ENCODE measurements at regions of chr4 and their contacts with region 1.

Region 1: GRCh38 chr4:186029571-186030398 is 39.2 kb upstream of the TLR3 start:
- DNase-seq: peak; percentile 54 to 95
- H3K4me3 ChIP-seq: peak overlapping the region; percentile 20 to 50
- H3K27ac ChIP-seq: peak overlapping the region; percentile 74 to 86
- H3K4me1 ChIP-seq: peaks cover 7 to 18% of the 10 kb centered on the region in 2 donors
- H3K27me3 ChIP-seq: no peaks in the 10 kb centered on the region
- CTCF ChIP-seq: no peak

Region 2: DNA sequence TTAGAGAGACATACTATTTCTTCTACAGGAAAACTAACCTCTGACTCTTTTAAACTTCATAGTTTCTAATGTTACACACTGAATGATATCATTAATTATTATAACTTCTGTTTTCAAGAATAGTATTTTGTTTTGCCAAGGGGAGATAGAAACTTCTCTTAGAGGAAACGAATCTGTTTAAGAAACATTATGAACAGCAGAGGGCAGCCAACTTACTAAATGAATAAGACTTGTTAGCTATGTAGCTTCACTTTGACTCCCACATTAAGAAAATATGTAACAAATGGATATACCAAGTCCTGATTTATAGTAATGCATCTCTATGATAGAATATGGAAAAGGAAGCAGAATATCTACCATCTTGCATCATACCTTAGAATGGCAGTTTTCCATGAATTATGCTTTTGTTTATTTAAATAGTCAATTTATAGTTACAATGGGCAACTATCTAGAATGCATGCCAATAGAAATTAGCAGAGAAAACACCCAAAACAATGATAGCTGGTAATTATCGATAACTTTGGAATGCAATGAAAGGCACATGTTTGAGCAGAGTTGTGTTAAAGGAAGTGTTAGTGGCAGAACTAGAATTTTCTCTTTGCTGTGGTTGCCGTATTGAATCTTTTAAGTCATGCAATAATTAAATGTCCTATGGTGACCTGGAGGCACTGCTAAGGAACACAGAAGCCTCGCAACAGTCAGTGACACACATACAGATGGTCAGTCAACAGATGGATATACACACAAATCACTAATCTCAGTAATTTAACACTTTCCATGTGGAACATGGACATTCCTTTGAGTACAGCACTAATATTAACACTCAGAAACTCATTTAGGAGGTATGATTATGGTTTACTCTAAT is 388.7 kb before region 1 on chr4:
- intact Hi-C with region 1: loop called (anchors 2 kb)
- DNase-seq: no peak
- H3K4me3 ChIP-seq: no peak overlapping the region
- H3K27ac ChIP-seq: no peak overlapping the region
- H3K4me1 ChIP-seq: peaks cover 0 to 3% of the 10 kb centered on the region in 2 donors
- H3K27me3 ChIP-seq: no peaks in the 10 kb centered on the region
- CTCF ChIP-seq: peak in 2 of 3 experiments; percentile 40 to 56

Region 3: DNA sequence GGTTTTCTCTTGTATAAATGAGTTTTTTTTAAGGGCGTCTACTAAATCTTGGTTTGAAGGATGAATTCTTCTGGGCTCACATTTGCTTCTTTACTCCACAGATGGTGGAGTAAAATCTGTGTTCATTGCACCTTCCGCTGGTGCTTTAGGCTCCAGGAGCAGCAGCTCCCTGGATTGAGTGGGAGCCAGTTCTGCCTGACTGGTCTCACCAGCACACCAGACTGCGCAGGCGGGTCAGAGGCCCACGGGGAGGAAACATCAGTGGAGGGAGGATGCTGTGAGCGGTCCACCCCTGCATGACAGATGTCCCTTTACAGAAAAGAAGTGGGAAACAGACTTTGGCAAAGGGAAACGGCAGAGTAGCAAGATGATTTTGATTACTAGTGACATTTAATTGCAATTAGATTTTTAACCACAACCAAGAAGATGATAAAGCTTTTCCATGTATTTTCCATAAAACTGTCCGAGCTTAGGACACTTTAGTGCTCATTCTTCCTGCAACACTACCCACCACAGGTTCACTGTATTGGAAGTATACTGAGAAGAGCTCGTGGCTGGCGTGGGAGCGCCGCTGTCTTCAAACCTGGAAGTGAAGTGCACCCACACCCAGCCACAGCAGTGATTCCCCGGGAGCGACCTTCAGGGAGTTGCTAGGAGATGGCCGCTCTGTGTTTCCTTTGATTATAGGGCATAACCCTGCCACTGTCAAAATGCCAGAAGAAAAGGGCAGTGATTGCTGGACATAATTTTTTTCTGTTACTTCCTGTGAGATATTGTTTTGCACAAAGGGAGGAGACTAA is 313.0 kb before region 1 on chr4:
- intact Hi-C with region 1: loop called (anchors 5 kb)
- DNase-seq: no peak
- H3K4me3 ChIP-seq: no peak overlapping the region
- H3K27ac ChIP-seq: peak overlapping the region in 1 of 2 donors; percentile 19
- H3K4me1 ChIP-seq: peaks cover 3 to 12% of the 10 kb centered on the region in 2 donors
- H3K27me3 ChIP-seq: no peaks in the 10 kb centered on the region
- CTCF ChIP-seq: no peak

Region 4: GRCh38 chr4:185738038-185738552 is 291.7 kb before region 1 on chr4:
- intact Hi-C with region 1: loop called (anchors 5 kb)
- DNase-seq: no peak
- H3K4me3 ChIP-seq: peak overlapping the region; percentile 1 to 43
- H3K27ac ChIP-seq: peak overlapping the region; percentile 81 to 90
- H3K4me1 ChIP-seq: peaks cover 13 to 55% of the 10 kb centered on the region in 2 donors
- H3K27me3 ChIP-seq: no peaks in the 10 kb centered on the region
- CTCF ChIP-seq: no peak

Region 5: DNA sequence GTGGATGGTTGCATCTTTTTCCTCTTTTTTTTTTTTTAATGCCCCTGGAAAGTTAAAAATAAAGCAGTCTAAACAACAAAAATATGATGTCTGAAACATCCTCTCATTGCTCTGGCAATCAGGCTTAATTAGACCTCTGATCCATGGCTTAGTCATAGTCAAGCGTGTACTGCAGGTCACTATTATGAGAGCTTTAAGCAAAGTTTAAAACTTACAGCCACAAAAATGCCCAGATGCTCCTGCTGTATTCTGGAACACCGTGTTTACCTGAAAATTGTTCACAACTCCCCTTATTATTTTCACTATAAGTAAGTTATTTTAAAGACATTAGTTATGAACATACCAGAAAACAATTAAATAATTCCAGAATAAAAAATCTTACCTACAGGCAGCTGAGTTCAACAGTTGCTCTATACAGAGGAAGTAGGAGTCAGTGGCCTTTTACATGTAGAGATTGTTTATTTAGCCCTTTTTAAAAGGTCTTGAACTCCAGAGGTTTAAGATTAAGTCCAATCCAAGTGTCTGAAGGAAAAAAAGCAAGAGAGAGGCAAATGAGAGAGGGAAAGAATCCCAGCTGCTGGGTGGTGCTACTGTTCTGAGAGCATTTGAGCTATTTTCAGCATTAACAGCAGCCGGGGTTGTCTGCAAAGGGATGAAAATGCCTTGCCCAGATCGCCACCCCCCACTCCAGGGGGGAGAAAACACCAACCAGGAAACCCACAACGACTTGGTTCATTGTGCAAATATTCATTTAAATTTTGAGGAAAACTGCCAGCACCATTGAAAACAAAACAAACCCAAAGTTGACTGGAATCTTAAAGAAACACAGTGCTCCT is 254.7 kb before region 1 on chr4:
- intact Hi-C with region 1: loop called (anchors 5 kb)
- DNase-seq: peak in 1 of 2 donors; percentile 76
- H3K4me3 ChIP-seq: peak overlapping the region; percentile 55 to 64
- H3K27ac ChIP-seq: peak overlapping the region; percentile 52 to 81
- H3K4me1 ChIP-seq: peaks cover 0 to 24% of the 10 kb centered on the region in 2 donors
- H3K27me3 ChIP-seq: no peaks in the 10 kb centered on the region
- CTCF ChIP-seq: no peak

Region 6: DNA sequence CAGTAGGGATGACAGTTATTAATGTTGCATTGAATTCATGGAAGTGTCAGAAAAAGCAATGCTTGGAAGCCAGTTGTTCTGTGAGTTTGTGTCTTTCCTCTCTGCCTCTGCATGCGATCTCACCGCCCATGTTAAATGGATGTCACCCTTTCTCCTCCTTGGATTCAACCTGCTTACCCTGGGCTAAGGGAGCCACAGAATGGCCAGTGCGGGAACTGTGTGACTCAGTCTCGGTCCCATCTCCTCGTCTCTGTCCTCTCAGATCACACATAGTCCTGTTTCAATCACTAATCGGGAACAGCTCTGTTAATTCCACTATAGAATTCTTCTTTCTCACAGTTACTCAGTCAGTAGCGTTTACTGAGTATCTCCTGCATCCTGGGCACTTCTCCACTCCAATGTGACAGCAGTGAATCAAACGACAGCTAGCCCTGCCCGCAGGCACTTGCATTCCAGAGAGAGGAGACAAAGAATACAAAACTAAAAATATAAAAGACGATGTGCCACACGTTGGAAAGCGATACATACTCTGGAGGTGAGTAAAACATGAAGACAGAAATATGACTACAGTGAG is 14.5 kb before region 1 on chr4:
- intact Hi-C with region 1: no loop called
- DNase-seq: no peak
- H3K4me3 ChIP-seq: no peak overlapping the region
- H3K27ac ChIP-seq: no peak overlapping the region
- H3K4me1 ChIP-seq: no peaks in the 10 kb centered on the region
- H3K27me3 ChIP-seq: no peaks in the 10 kb centered on the region
- CTCF ChIP-seq: no peak

Region 7: GRCh38 chr4:186104890-186105646 is 75.3 kb after region 1 on chr4:
- intact Hi-C with region 1: no loop called
- DNase-seq: no peak
- H3K4me3 ChIP-seq: peak overlapping the region; percentile 66 to 76
- H3K27ac ChIP-seq: no peak overlapping the region
- H3K4me1 ChIP-seq: peaks cover 3 to 6% of the 10 kb centered on the region in 2 donors
- H3K27me3 ChIP-seq: no peaks in the 10 kb centered on the region
- CTCF ChIP-seq: no peak

Region 8: DNA sequence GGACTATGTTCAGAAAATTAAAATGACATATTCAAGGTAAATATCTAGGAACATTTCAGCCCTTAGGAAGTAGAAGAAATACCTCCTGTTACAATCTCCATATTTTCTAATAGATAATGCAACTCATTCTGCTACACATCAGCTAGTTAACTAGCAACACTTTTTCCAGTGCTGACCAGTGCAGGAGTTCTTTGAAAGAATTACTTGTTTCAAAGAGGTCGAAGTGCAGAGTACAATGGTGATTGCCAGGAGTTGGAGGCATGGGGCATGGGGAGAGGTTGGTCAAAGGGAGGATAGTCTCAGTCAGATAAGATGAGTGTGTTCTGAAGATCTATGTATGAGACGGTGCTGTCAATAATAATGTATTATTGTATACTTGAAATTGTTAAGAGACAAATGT is 472.4 kb after region 1 on chr4:
- intact Hi-C with region 1: no loop called
- DNase-seq: no peak
- H3K4me3 ChIP-seq: no peak overlapping the region
- H3K27ac ChIP-seq: no peak overlapping the region
- H3K4me1 ChIP-seq: no peaks in the 10 kb centered on the region
- H3K27me3 ChIP-seq: no peaks in the 10 kb centered on the region
- CTCF ChIP-seq: no peak

Measured in ascending aorta (tissue), 2 donors.